ENCODE measurements at regions of chr11 and their contacts with region 1.

Region 1: DNA sequence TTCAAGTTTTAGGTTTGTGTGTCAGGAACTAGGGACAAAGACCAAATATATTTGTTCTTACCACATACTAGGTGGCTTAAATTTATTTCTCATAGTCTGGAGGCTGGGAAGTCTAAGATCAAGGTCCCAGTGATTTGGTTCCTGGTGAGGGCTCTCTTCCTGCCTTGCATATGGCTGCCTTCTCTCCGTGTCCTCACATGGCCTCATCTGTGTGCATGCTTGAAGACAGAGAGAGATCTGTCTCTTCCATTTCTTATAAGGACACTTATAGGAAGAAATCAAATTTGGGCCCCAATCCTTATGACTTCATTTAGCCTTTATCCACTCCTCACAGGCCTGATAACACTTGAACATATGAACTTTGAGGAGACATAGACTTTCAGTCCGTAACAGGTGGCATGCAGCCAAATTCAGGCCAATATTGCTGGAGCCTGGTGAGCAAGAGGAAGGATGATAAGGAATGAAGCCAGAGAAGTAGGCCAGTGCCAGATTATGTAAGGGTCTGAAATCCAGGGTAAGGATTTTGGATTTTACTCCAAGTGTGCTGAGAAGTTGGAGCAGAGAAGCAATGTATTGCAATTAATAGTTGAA is 35.1 kb downstream of the TTC17 start:
- DNase-seq: no peak
- ATAC-seq: no peak
- H3K4me3 ChIP-seq: no peak overlapping the region
- H3K4me3 Mint-ChIP-seq: no peak overlapping the region
- H3K27ac ChIP-seq: no peak overlapping the region
- H3K27ac Mint-ChIP-seq: peak overlapping the region in 1 of 9 donors; percentile 71
- H3K4me1 ChIP-seq: no peaks in the 10 kb centered on the region
- H3K4me1 Mint-ChIP-seq: peaks cover 0 to 32% (median 7%) of the 10 kb centered on the region in 7 donors
- H3K27me3 ChIP-seq: no peaks in the 10 kb centered on the region
- H3K27me3 Mint-ChIP-seq: no peaks in the 10 kb centered on the region

Region 2: DNA sequence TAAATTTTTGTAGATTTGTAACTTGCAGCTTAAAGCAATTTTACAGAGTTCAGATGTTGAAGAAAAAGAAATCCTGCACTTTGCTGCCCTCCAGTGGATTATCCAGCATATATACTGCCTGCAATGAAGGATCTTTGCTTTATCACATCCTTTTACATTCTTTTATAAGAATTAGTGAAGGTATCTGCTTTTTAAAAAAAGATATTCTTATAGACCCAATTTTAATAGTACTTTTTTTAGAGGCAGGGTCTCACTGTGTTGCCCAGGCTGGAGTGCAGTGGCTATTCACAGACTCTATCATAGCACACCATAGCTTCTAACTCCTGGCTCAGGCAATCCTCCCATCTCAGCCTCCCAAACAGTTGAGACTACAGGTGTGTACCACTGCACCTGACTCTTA is 25.6 kb after region 1 on chr11:
- CTCF ChIA-PET with region 1: no interaction called
- POLR2A ChIA-PET with region 1: no interaction called
- intact Hi-C with region 1: loop called in 1 of 2 experiments (anchors 2 kb)
- DNase-seq: peak in 6 of 9 donors; percentile 1 to 23 (median 8)
- ATAC-seq: no peak
- H3K4me3 ChIP-seq: no peak overlapping the region
- H3K4me3 Mint-ChIP-seq: no peak overlapping the region
- H3K27ac ChIP-seq: no peak overlapping the region
- H3K27ac Mint-ChIP-seq: no peak overlapping the region
- H3K4me1 ChIP-seq: no peaks in the 10 kb centered on the region
- H3K4me1 Mint-ChIP-seq: peaks cover 0 to 3% (median 0%) of the 10 kb centered on the region in 7 donors
- H3K27me3 ChIP-seq: no peaks in the 10 kb centered on the region
- H3K27me3 Mint-ChIP-seq: no peaks in the 10 kb centered on the region